Spleen (tissue), 13 donors: ENCODE measurements at regions of chr10 and their contacts with region 1.

Region 1: DNA sequence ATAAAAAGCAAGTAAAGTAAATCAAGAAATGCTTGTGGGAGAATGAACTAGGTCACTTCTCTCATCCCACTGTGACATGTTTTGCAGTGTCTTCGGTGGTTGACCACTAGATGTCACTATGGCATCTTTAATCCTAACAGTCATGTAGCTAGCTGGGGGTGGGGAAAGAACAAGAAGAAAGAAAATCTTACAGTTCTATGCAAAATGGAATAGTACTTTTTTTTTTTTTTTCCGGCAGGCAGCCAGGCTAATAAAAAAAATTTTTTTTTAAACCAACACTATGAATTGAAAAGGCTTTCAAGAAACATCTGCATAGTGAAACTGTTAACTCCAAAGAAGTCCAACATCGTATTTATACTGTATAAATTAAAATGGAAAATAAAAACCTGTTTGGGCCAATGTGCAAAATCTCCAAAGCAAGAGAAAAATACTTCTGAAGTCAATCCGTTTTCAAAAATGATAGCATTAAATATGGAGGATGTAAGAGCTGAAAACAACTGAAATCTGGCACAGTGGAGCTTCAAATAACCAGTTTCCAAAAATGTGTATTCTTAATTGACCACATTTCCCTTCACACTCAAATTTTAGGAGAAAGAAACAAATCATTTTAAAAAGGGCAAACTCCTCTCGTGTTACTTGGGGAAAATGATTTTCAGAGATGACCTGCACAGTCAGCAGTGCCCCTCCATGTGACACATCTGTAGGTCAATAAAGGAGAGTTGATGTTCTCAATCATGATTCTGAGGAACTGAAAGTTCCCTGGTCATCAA is 38.5 kb downstream of the CDK1 start:
- DNase-seq: no peak
- H3K4me3 ChIP-seq: no peak overlapping the region
- H3K27ac ChIP-seq: peak overlapping the region in 7 of 8 donors; percentile 5 to 61 (median 50)
- H3K4me1 ChIP-seq: peaks cover 0 to 28% (median 9%) of the 10 kb centered on the region in 6 donors
- H3K27me3 ChIP-seq: no peaks in the 10 kb centered on the region
- CTCF ChIP-seq: peak; percentile 54 to 89 (median 77)
- POLR2A ChIP-seq: no peak

Region 2: GRCh38 chr10:60742512-60742911 is 74.3 kb before region 1 on chr10:
- intact Hi-C with region 1: no loop called
- DNase-seq: no peak
- H3K4me3 ChIP-seq: no peak overlapping the region
- H3K27ac ChIP-seq: no peak overlapping the region
- H3K4me1 ChIP-seq: no peaks in the 10 kb centered on the region
- H3K27me3 ChIP-seq: peaks cover 0 to 4% (median 0%) of the 10 kb centered on the region in 7 donors
- CTCF ChIP-seq: no peak
- POLR2A ChIP-seq: no peak

Region 3: GRCh38 chr10:60964257-60965235 is 147.7 kb after region 1 on chr10:
- intact Hi-C with region 1: loop called (anchors 5 kb)
- DNase-seq: peak; percentile 71
- H3K4me3 ChIP-seq: no peak overlapping the region
- H3K27ac ChIP-seq: peak overlapping the region in 6 of 8 donors; percentile 21 to 49 (median 35)
- H3K4me1 ChIP-seq: peaks cover 5 to 22% (median 14%) of the 10 kb centered on the region in 6 donors
- H3K27me3 ChIP-seq: no peaks in the 10 kb centered on the region
- CTCF ChIP-seq: peak in 10 of 11 experiments; percentile 60 to 80 (median 73)
- POLR2A ChIP-seq: no peak

Region 4: DNA sequence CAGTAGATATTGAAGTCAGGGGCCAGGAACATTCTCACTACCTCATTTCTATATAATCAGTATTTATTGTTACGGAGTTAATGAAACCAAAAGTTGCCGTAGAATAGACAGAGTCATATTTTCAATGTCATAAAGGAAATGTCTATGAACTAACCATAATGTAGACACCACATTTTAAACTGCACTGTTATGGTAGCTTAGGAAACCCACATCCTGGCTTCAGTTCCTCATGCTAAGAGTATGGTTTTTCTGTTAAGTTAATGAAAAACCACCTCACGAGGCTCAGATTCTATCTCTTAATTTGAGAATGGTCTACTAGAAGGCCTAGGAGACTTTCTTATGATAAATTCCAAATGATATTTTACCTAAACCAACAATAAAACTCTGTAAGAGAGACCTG is 469.9 kb after region 1 on chr10:
- intact Hi-C with region 1: loop called (anchors 5 kb)
- DNase-seq: no peak
- H3K4me3 ChIP-seq: no peak overlapping the region
- H3K27ac ChIP-seq: peak overlapping the region in 6 of 8 donors; percentile 4 to 61 (median 40)
- H3K4me1 ChIP-seq: peaks cover 2 to 43% (median 24%) of the 10 kb centered on the region in 6 donors
- H3K27me3 ChIP-seq: no peaks in the 10 kb centered on the region
- CTCF ChIP-seq: no peak
- POLR2A ChIP-seq: no peak

Region 5: DNA sequence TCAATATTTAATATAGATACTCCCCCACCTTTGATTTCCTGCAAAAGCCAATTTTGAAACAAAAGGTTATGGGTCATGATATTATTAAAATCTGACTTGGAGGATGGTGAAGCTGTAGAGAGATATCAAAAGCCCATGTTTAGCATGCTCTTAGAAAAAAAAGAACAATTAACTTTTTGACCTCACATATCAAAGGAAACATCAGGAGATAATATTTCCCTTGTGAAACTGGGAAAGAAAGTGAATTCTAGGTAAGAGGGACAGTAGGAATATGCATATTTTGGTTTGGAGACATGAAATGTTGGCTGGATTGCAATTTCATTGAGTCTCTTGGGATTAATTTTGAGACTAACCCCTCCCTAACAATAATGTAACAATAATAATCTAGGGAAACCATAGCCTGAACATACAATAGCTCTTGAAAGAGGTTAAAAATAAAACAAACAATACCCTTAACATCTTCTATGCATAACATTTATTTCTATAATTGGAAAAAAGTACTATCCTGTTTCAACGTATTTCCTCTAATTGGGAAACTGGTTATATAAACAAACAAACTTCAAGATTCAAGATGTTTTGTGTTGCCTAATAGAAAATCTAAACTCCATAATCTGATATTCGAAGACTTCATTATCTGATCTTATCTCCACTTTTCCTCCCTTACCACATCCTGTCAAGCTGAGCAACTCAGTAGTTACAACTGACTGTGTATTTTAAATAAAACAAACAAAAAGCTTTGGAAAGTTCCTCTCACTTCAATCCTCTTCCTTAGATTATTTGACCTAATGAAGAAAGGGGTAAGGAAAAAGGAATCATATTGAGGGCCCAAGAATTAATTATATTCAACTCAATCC is 621.6 kb after region 1 on chr10:
- intact Hi-C with region 1: no loop called
- DNase-seq: no peak
- H3K4me3 ChIP-seq: no peak overlapping the region
- H3K27ac ChIP-seq: peak overlapping the region in 7 of 8 donors; percentile 1 to 68 (median 40)
- H3K4me1 ChIP-seq: peaks cover 0 to 18% (median 10%) of the 10 kb centered on the region in 6 donors
- H3K27me3 ChIP-seq: no peaks in the 10 kb centered on the region
- CTCF ChIP-seq: no peak
- POLR2A ChIP-seq: no peak

Region 6: GRCh38 chr10:61733358-61733940 is 916.6 kb after region 1 on chr10:
- intact Hi-C with region 1: loop called (anchors 5 kb)
- DNase-seq: no peak
- H3K4me3 ChIP-seq: no peak overlapping the region
- H3K27ac ChIP-seq: no peak overlapping the region
- H3K4me1 ChIP-seq: peaks cover 0 to 7% (median 3%) of the 10 kb centered on the region in 6 donors
- H3K27me3 ChIP-seq: no peaks in the 10 kb centered on the region
- CTCF ChIP-seq: peak in 9 of 11 experiments; percentile 14 to 57 (median 45)
- POLR2A ChIP-seq: no peak

Region 7: GRCh38 chr10:61744469-61744868 is 927.7 kb after region 1 on chr10:
- intact Hi-C with region 1: no loop called
- DNase-seq: no peak
- H3K4me3 ChIP-seq: no peak overlapping the region
- H3K27ac ChIP-seq: no peak overlapping the region
- H3K4me1 ChIP-seq: no peaks in the 10 kb centered on the region
- H3K27me3 ChIP-seq: no peaks in the 10 kb centered on the region
- CTCF ChIP-seq: no peak
- POLR2A ChIP-seq: no peak